ENCODE measurements at regions of chr1 and their contacts with region 1.

Region 1: GRCh38 chr1:221478050-221478949 is 263.6 kb downstream of the DUSP10 start:
- DNase-seq: peak; percentile 74
- H3K4me3 Mint-ChIP-seq: no peak overlapping the region
- H3K27ac Mint-ChIP-seq: no peak overlapping the region
- H3K4me1 Mint-ChIP-seq: peaks cover 2% of the 10 kb centered on the region
- H3K27me3 Mint-ChIP-seq: peaks cover 5% of the 10 kb centered on the region

Region 2: GRCh38 chr1:220198186-220199005 is 1279.9 kb before region 1 on chr1:
- CTCF ChIA-PET with region 1: no interaction called
- intact Hi-C with region 1: no loop called
- DNase-seq: no peak
- H3K4me3 Mint-ChIP-seq: no peak overlapping the region
- H3K27ac Mint-ChIP-seq: no peak overlapping the region
- H3K4me1 Mint-ChIP-seq: no peaks in the 10 kb centered on the region
- H3K27me3 Mint-ChIP-seq: no peaks in the 10 kb centered on the region

Region 3: GRCh38 chr1:221858818-221859611 is 380.7 kb after region 1 on chr1:
- CTCF ChIA-PET with region 1: no interaction called
- intact Hi-C with region 1: loop called (anchors 1 kb)
- DNase-seq: no peak
- H3K4me3 Mint-ChIP-seq: no peak overlapping the region
- H3K27ac Mint-ChIP-seq: no peak overlapping the region
- H3K4me1 Mint-ChIP-seq: peaks cover 11% of the 10 kb centered on the region
- H3K27me3 Mint-ChIP-seq: no peaks in the 10 kb centered on the region

Region 4: DNA sequence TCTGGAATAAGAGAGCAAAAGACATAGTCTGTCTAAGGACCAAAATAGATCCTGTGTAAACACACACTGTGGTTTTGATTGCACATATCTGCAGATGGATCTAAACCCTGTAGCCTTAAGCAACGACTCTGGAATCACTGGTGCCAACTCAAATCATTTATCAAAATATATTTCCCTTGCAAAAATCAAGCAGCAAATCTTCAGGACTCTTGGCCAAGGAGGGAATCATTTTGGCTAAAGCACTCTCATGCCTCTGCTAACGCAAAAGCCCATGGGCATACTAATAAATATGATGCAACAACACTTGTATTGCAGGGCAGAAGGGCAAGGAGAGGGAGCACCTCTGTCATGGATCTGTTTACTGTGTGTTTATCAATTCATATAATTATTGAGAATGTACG is 419.0 kb after region 1 on chr1:
- CTCF ChIA-PET with region 1: no interaction called
- intact Hi-C with region 1: loop called (anchors 10 kb)
- DNase-seq: no peak
- H3K4me3 Mint-ChIP-seq: no peak overlapping the region
- H3K27ac Mint-ChIP-seq: no peak overlapping the region
- H3K4me1 Mint-ChIP-seq: no peaks in the 10 kb centered on the region
- H3K27me3 Mint-ChIP-seq: no peaks in the 10 kb centered on the region

Region 5: DNA sequence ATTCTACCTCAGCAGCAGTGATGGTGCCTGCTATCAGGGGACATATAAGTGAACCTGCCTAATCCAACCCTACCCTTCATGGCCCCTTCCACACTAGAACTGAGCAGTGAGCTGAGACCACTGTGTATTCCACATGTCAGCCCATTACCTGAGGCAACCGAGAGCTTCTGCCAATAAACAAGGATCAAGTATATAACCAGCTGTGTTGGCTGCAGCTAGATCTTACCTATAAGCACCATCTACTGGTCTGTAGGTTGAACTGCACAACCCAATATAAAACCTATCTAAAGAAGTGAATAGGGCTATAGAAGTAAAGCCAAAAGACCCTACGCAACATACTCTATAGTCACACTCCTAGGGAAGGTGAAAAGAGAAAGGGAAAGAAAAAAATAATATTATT is 692.7 kb after region 1 on chr1:
- CTCF ChIA-PET with region 1: no interaction called
- intact Hi-C with region 1: loop called (anchors 1 kb)
- DNase-seq: no peak
- H3K4me3 Mint-ChIP-seq: no peak overlapping the region
- H3K27ac Mint-ChIP-seq: no peak overlapping the region
- H3K4me1 Mint-ChIP-seq: no peaks in the 10 kb centered on the region
- H3K27me3 Mint-ChIP-seq: no peaks in the 10 kb centered on the region

Measured in activated naive CD4-positive, alpha-beta T cell treated with anti-CD3 and anti-CD28 coated beads for 36 hours (primary cell).